Mammary epithelial cell (primary cell): ENCODE measurements at regions of chr2 and their contacts with region 1.

Region 1: DNA sequence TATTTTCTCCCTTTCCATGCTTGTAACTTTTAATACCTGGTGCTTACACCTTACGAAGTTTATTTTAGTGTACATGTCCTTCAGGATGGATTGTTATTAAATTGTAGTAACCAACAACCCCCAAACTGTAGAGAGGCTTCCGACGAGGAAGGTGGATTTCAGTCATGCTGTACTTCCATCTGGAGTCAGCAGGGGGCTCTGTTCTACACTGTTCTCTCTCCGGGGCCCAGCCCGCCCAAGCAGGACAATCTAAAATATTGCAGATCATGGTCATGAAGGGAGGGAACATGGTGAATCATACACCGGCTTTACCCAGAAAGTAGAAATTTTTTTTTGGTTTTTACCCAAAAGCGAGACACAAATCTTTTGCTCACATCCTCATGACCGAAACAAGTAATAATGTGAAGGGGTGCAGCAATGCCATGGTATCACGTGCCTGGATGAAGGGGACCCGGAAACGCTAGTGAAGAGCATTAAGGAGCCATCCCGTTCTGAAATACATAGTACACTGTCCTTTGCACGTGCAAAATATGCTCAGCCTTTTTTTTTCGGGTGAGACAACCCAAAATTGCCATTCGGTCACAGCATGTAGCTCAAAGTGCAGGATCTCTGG is 884.8 kb downstream of the EPHA4 start:
- DNase-seq: peak; percentile 54
- H3K4me3 ChIP-seq: no peak overlapping the region
- H3K27ac ChIP-seq: no peak overlapping the region
- H3K4me1 ChIP-seq: peaks cover 3% of the 10 kb centered on the region
- H3K27me3 ChIP-seq: no peaks in the 10 kb centered on the region
- CTCF ChIP-seq: peak; percentile 81 to 90

Region 2: GRCh38 chr2:219736209-219736608 is 951.1 kb before region 1 on chr2:
- CTCF ChIA-PET with region 1: no interaction called
- dilution Hi-C with region 1: no loop called
- in situ Hi-C with region 1: loop called in 1 of 2 experiments (anchors 25 kb)
- intact Hi-C with region 1: loop called (anchors 5 kb)
- DNase-seq: peak; percentile 67
- H3K4me3 ChIP-seq: no peak overlapping the region
- H3K27ac ChIP-seq: no peak overlapping the region
- H3K4me1 ChIP-seq: peaks cover 12% of the 10 kb centered on the region
- H3K27me3 ChIP-seq: no peaks in the 10 kb centered on the region
- CTCF ChIP-seq: peak; percentile 47 to 62

Region 3: DNA sequence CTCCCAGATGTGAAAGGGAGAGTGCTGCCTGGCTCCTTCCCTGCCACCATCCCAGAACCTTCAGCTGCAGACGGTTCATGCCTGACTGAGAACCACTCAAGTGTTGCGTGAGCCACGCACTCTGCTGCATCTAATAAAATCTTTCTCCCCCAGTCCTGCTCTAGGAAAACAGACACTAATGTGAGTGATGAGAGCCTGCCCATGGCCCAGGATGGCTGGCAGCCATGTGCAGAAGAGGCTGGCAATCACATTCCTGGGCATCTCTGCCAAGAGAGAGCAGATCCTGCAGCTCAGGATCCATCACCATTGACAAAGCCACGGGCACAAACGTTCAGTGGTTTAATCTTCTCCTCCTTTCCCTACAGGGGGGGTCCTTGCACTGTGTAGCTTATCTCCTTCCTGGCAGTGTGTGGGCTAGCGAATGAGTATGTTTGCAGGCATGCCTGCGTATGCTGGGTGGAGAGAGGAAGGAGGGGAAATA is 582.4 kb before region 1 on chr2:
- CTCF ChIA-PET with region 1: no interaction called
- dilution Hi-C with region 1: no loop called
- in situ Hi-C with region 1: no loop called
- intact Hi-C with region 1: loop called (anchors 5 kb)
- DNase-seq: peak; percentile 63
- H3K4me3 ChIP-seq: no peak overlapping the region
- H3K27ac ChIP-seq: no peak overlapping the region
- H3K4me1 ChIP-seq: no peaks in the 10 kb centered on the region
- H3K27me3 ChIP-seq: no peaks in the 10 kb centered on the region
- CTCF ChIP-seq: peak; percentile 37 to 47

Region 4: GRCh38 chr2:220748875-220749479 is 61.6 kb after region 1 on chr2:
- CTCF ChIA-PET with region 1: no interaction called
- dilution Hi-C with region 1: no loop called
- in situ Hi-C with region 1: no loop called
- intact Hi-C with region 1: no loop called
- DNase-seq: no peak
- H3K4me3 ChIP-seq: no peak overlapping the region
- H3K27ac ChIP-seq: no peak overlapping the region
- H3K4me1 ChIP-seq: no peaks in the 10 kb centered on the region
- H3K27me3 ChIP-seq: no peaks in the 10 kb centered on the region
- CTCF ChIP-seq: no peak

Region 5: GRCh38 chr2:220891405-220891804 is 204.1 kb after region 1 on chr2:
- CTCF ChIA-PET with region 1: no interaction called
- dilution Hi-C with region 1: no loop called
- in situ Hi-C with region 1: no loop called
- intact Hi-C with region 1: loop called (anchors 2 kb)
- DNase-seq: peak; percentile 74
- H3K4me3 ChIP-seq: no peak overlapping the region
- H3K27ac ChIP-seq: no peak overlapping the region
- H3K4me1 ChIP-seq: no peaks in the 10 kb centered on the region
- H3K27me3 ChIP-seq: no peaks in the 10 kb centered on the region
- CTCF ChIP-seq: no peak

Region 6: DNA sequence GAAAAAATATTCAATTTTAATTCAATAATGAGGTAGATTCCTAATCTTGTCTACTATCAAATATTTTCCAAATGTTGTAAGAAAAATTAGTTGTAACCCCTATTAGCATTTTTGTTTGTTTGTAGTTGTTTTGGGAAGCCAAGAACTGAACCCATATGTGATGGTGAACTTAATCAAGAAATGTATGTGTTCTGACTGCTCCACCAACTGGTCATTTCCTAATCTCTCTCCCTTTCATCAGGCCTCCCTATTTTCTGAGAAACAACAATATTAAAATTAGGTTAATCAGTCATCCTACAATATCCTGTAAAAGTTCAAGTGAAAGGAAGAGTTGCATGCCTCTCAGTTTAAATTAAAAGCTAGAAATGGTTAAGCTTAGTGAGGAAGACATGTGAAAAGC is 380.8 kb after region 1 on chr2:
- CTCF ChIA-PET with region 1: no interaction called
- dilution Hi-C with region 1: no loop called
- in situ Hi-C with region 1: no loop called
- intact Hi-C with region 1: loop called (anchors 1 kb)
- DNase-seq: no peak
- H3K4me3 ChIP-seq: no peak overlapping the region
- H3K27ac ChIP-seq: no peak overlapping the region
- H3K4me1 ChIP-seq: no peaks in the 10 kb centered on the region
- H3K27me3 ChIP-seq: no peaks in the 10 kb centered on the region
- CTCF ChIP-seq: peak in 1 of 2 donors; percentile 23

Region 7: GRCh38 chr2:221309892-221310583 is 622.7 kb after region 1 on chr2:
- CTCF ChIA-PET with region 1: no interaction called
- dilution Hi-C with region 1: no loop called
- in situ Hi-C with region 1: no loop called
- intact Hi-C with region 1: loop called (anchors 10 kb)
- DNase-seq: no peak
- H3K4me3 ChIP-seq: no peak overlapping the region
- H3K27ac ChIP-seq: no peak overlapping the region
- H3K4me1 ChIP-seq: no peaks in the 10 kb centered on the region
- H3K27me3 ChIP-seq: no peaks in the 10 kb centered on the region
- CTCF ChIP-seq: no peak